ENCODE measurements at regions of chrX and their contacts with region 1.

Region 1: DNA sequence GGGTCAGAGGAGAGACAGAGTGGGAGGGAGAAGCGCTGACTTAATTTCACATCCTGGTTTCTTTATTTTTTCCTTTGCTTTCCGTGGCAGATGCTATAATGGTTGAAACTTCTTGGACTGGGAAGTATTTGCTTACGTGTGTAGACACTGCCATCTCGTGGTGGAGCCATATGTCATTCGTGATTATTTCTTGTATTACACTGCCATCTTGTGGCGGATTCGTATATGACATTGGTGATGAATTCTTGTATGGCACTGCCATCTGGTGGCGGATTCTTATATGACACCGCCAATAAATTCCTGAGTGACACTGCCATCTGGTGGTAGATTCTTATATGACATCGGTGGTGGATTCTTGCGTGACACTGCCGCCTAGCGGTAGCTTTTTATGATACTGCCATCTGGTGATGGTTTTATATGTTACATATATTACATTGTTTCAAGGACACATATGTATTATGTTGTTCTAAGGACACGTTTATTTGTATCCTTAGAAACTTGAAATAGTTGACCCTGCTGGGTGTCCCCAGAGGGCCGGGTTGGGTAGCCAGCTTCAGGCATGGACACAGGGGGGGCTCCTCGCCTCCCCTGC is 37.3 kb upstream of the CLCN4 start:
- DNase-seq: peak in 2 of 3 donors; percentile 58 to 64
- ATAC-seq: peak; percentile 93 to 98 (median 96)
- H3K4me3 ChIP-seq: no peak overlapping the region
- H3K27ac ChIP-seq: no peak overlapping the region
- H3K4me1 ChIP-seq: no peaks in the 10 kb centered on the region
- H3K27me3 ChIP-seq: no peaks in the 10 kb centered on the region
- CTCF ChIP-seq: peak; percentile 99 to 100 (median 100)
- POLR2A ChIP-seq: no peak

Region 2: DNA sequence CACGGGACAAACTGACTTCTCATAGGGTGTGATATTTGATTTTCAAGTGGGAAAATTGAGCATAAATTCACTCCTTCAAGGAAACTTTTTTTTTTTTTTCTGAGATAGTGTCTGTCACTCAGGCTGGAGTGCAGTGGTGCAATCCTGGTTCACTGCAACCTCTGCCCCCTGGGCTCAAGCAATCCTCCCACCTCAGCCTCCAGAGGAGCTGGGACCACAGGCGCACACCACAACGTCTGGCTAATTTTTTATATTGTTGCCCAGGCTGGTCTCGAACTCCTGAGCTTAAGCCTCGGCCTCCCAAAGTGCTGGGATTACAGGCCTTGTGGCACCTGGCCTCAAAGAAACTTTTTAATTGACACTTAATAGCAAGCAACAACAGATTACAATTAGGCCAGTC is 138.6 kb before region 1 on chrX:
- intact Hi-C with region 1: no loop called
- DNase-seq: no peak
- ATAC-seq: no peak
- H3K4me3 ChIP-seq: no peak overlapping the region
- H3K27ac ChIP-seq: peak overlapping the region in 1 of 3 donors; percentile 11
- H3K4me1 ChIP-seq: no peaks in the 10 kb centered on the region
- H3K27me3 ChIP-seq: no peaks in the 10 kb centered on the region
- CTCF ChIP-seq: no peak
- POLR2A ChIP-seq: no peak

Region 3: GRCh38 chrX:9995855-9996339 is 123.6 kb before region 1 on chrX:
- intact Hi-C with region 1: loop called (anchors 5 kb)
- DNase-seq: peak; percentile 81 to 86 (median 86)
- ATAC-seq: peak; percentile 99 to 100 (median 100)
- H3K4me3 ChIP-seq: no peak overlapping the region
- H3K27ac ChIP-seq: no peak overlapping the region
- H3K4me1 ChIP-seq: no peaks in the 10 kb centered on the region
- H3K27me3 ChIP-seq: no peaks in the 10 kb centered on the region
- CTCF ChIP-seq: peak; percentile 96 to 99 (median 98)
- POLR2A ChIP-seq: no peak

Measured in right lobe of liver (tissue), 6 donors.